Activated CD4-positive, alpha-beta memory T cell treated with anti-CD3 and anti-CD28 coated beads, Interleukin-2, amount 10 ng/mL, durations not matched to agents 7 days and 5 days (primary cell): ENCODE measurements at regions of chr11 and their contacts with region 1.

Region 1: GRCh38 chr11:88552377-88553062 is 215.0 kb upstream of the CTSC start:
- DNase-seq: peak; percentile 69
- H3K4me3 Mint-ChIP-seq: no peak overlapping the region
- H3K27ac Mint-ChIP-seq: no peak overlapping the region
- H3K4me1 Mint-ChIP-seq: no peaks in the 10 kb centered on the region
- H3K27me3 Mint-ChIP-seq: peaks cover 25% of the 10 kb centered on the region

Region 2: DNA sequence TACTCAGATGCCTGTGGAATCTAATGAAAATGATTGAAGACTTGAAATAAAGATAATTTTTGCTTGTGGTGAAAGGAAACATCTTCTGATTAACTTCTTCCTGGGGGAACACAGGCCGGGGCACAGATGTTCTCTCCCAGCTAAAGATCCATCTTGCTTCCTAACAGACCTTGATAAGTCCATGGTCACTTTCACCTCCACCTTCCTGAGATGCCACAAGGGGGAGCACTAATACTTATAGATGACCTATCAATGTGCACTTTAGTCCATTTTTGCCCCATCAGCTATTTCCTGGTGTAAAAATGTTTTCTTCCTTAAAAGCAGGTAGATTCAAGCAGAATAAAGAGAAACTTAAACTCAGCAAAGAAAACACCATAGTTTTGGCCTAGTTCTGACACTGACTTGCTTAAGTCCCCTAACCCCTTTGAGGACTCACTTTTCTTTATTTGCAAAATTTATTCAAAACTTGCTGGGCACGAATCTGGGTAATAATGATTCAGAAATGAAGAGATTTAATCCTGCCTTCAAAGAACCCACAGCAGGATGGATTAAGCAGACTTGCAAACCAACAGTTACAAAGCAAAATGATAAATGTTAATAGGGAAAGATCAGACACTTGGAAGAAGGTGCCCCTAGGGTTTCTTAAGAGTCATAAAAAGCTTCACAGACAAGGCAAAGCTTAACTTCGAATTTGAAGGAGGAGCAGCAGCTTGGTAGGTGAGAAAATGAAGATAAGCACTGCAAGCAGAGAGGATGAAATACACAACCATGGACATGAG is 535.9 kb before region 1 on chr11:
- CTCF ChIA-PET with region 1: interaction called, 51 read pairs
- POLR2A ChIA-PET with region 1: interaction called, 5 read pairs
- DNase-seq: peak; percentile 60
- H3K4me3 Mint-ChIP-seq: no peak overlapping the region
- H3K27ac Mint-ChIP-seq: no peak overlapping the region
- H3K4me1 Mint-ChIP-seq: no peaks in the 10 kb centered on the region
- H3K27me3 Mint-ChIP-seq: no peaks in the 10 kb centered on the region

Region 3: GRCh38 chr11:88103337-88104206 is 448.9 kb before region 1 on chr11:
- CTCF ChIA-PET with region 1: interaction called, 23 read pairs
- POLR2A ChIA-PET with region 1: no interaction called
- DNase-seq: peak; percentile 28
- H3K4me3 Mint-ChIP-seq: no peak overlapping the region
- H3K27ac Mint-ChIP-seq: no peak overlapping the region
- H3K4me1 Mint-ChIP-seq: no peaks in the 10 kb centered on the region
- H3K27me3 Mint-ChIP-seq: peaks cover 21% of the 10 kb centered on the region

Region 4: DNA sequence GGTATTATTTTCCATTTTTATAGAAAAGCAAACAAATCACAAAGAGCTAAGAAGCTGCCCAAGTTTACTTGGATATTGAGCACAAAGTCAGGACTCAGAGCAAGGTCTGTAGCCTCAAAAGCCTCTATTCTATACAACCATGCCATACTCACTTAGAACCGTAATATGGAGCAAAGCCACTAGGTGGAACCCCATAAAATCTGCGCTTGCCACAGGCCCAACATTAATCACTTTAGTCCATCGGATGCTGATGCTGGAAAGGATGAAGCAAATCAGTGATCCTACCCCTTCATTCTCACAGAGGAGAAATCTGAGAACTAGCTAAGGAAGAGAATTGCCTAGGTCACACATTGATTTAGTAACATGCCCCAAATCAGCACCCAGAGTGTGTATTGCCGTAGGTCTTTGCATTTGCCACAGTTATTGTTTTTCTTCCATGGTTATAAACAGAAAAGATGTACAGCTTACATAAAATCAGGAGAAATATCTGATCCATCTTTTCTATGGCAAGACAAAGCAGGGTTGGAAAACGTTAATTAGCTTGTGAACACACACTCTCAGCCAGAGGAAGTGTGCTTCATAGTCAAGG is 320.5 kb before region 1 on chr11:
- CTCF ChIA-PET with region 1: interaction called, 12 read pairs
- POLR2A ChIA-PET with region 1: no interaction called
- DNase-seq: peak; percentile 19
- H3K4me3 Mint-ChIP-seq: no peak overlapping the region
- H3K27ac Mint-ChIP-seq: no peak overlapping the region
- H3K4me1 Mint-ChIP-seq: no peaks in the 10 kb centered on the region
- H3K27me3 Mint-ChIP-seq: peaks cover 2% of the 10 kb centered on the region

Region 5: GRCh38 chr11:88435189-88435814 is 117.2 kb before region 1 on chr11:
- CTCF ChIA-PET with region 1: no interaction called
- POLR2A ChIA-PET with region 1: no interaction called
- DNase-seq: no peak
- H3K4me3 Mint-ChIP-seq: no peak overlapping the region
- H3K27ac Mint-ChIP-seq: peak overlapping the region; percentile 32
- H3K4me1 Mint-ChIP-seq: peaks cover 11% of the 10 kb centered on the region
- H3K27me3 Mint-ChIP-seq: peaks cover 1% of the 10 kb centered on the region